ENCODE measurements at regions of chr18 and their contacts with region 1.

Region 1: GRCh38 chr18:48445540-48445939 is 36.4 kb upstream of the ZBTB7C start:
- DNase-seq: peak; percentile 61 to 85
- H3K4me3 ChIP-seq: no peak overlapping the region
- H3K4me1 ChIP-seq: no peaks in the 10 kb centered on the region
- H3K27me3 ChIP-seq: peaks cover 17% of the 10 kb centered on the region

Region 2: DNA sequence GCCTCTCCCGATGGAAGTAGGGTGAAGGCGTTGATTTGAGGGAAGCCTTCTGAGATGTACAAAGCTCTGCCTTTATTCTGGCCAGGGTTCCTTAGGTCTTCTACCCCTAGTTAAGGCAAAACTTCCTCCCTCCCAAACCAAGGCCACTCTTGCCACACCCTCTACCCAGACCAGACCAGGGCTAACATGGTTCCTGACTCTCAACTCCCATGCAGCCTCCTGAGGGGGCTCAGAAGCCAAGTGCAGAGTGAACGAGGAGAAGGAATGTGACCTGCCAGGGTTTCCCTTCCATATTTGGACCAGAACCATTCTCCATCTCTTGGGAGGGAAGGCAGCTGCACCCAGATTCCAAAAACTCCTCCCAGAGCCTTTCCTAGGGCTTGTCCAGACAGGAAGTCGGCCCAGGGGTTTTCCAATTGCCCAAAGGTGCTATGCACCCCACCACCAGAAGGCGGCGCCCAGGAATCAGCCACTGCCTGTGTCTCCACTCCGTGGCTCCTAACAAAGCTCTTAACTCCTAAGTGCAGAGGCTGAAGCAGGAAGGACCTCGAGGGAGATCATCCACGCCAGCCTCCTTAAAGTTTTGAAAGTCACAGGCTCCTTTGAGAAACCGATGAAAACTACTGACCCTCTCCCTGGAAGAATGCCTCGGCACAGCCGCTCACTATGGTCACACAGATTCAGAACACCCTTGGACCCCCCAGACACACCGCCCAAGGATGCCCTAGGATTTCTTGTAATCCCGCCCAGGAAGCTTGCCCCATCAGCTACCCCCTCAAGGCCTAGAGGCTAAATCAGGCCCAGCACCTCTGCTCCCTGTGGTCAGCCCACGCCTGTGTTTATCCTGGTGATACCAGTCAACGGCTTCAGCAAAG is 672.9 kb before region 1 on chr18:
- in situ Hi-C with region 1: loop called (anchors 25 kb)
- DNase-seq: peak; percentile 72 to 88
- H3K4me3 ChIP-seq: no peak overlapping the region
- H3K4me1 ChIP-seq: no peaks in the 10 kb centered on the region
- H3K27me3 ChIP-seq: 0 out of 2 replicates have a peak, but pooled peaks cover 9% of the 10 kb centered on the region

Region 3: DNA sequence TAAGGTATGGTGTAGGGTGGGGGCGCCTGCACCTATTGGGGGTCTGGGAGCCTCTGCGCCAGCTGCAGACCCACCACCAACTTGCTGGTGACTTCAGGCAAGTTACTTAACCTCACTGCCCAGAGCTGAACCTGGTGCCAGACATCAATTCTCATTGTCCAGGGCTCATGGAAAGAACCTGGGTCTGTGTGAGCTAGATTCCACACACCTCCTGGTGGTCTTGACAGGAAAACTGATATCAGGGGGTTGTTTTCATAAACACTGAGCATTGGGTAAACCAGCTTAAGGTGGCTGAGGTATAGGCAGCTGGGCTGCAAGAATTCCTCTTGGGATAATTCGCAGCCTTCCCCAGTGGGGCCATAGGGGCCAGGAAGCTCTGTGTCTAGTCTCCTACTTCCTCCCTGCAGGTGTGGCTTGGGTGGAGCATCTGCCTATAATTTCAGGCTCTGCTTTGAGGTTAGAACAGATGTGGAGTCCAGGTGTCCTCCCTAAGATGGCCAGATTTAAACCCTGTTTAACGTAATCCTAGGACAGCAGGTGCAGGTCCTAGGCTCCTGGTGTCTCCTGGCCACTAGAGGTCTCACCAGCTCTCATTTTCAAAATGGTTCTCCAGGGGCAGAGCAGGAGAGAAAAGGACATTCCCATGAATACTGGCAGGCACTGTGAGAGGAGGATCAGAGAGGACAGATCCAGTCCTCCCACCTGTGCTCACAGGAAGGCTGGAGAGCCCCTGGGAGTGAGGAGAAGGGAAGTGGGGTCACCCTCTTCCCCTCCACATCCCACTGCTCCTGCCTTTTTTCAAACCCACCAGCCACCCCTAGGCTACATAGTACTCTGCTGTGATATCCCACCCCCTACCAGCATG is 414.7 kb before region 1 on chr18:
- in situ Hi-C with region 1: loop called (anchors 5 kb)
- DNase-seq: peak; percentile 69 to 73
- H3K4me3 ChIP-seq: no peak overlapping the region
- H3K4me1 ChIP-seq: no peaks in the 10 kb centered on the region
- H3K27me3 ChIP-seq: no peaks in the 10 kb centered on the region